Activated T-helper 2 cell treated with anti-CD3 and anti-CD28 coated beads, Interferon-gamma antibody, Interleukin-2, Interleukin-4, amounts not matched to agents 10 μg/mL and 5 μg/mL and 100 μg/mL, durations not matched to agents 14 hours and 24 hours and 36 hours (primary cell): ENCODE measurements at regions of chr14 and their contacts with region 1.

Region 1: DNA sequence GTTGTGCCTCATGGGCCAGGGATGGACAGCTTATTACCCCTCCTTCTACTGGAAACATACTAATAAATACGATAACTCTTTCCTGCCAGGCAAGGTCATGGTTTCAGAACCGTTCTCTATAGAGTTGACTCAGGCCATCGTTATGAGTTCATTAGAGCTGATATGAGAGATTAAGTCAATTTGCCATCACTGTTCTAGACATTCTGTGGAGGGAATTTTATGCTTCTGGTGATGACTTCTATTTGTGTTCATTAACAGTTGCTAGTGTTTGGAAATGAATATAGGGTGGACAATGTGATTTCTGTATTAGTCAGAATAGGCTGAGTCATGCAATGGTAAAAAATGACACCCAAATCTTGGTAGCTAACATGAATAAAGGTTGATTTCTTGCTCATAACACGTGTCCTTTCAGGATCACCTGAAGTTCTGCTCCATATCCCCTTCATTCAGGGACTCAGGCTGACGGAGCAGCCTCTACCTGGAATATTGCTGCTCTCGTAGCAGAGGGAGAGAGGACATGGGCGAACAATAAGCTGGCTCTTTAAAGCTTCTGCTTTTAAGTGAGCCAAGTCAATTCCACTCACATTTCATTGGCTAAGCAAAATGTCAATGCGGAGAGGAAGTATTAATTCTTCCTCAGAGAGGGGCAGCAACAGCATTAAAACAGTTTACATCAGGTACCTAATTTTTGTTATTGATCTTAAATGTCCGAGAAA is 18.5 kb upstream of the TBPL2 start:
- DNase-seq: no peak
- H3K4me3 Mint-ChIP-seq: no peak overlapping the region
- H3K27ac Mint-ChIP-seq: peak overlapping the region; percentile 31
- H3K4me1 Mint-ChIP-seq: peaks cover 22% of the 10 kb centered on the region
- H3K27me3 Mint-ChIP-seq: peaks cover 18% of the 10 kb centered on the region

Region 2: GRCh38 chr14:55180434-55180833 is 278.5 kb before region 1 on chr14:
- intact Hi-C with region 1: no loop called
- DNase-seq: no peak
- H3K4me3 Mint-ChIP-seq: no peak overlapping the region
- H3K27ac Mint-ChIP-seq: no peak overlapping the region
- H3K4me1 Mint-ChIP-seq: peaks cover 7% of the 10 kb centered on the region
- H3K27me3 Mint-ChIP-seq: no peaks in the 10 kb centered on the region

Region 3: DNA sequence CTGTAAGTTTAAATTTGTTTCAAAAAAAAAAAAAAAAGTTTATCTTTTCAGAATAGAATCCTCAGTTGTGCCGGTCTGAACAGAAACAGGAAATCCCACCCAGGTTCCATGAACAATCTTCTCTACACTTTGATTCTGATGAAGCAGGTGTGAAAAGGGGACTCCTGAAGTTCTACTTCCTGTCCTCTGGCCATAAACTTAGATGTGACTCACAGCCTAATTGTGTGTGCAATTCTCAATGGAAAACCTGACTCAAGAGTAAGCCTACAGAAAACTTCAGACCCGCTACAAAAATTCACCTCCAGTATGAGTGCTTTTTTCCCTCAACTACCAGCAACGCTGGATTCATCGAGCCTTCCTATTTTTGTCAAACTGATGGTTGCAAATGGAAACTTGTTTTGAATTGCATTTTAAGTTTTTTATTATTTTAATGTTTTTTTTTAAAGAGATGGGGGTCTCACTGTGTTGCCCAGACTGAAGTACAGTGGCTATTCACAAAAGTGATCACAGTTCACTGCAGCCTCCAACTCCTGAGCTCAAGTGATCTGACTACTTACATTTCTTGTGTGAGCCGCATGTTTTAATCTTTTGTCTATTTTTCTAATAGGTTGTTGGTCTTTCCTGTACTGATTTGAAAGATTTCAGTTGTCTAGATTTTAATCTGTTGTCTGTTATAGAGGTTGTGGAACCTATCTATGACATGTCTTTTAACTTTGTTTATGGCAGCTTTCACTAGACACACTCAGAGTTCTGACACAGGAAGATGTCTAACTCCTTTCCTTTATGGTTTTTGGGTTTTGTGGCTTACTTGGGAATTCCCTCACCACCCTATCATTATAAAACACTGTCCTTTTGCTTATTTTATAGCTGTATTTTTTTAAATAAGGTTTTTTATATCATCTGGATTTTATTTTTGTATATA is 84.9 kb before region 1 on chr14:
- intact Hi-C with region 1: loop called (anchors 1 kb)
- DNase-seq: peak; percentile 22
- H3K4me3 Mint-ChIP-seq: peak overlapping the region; percentile 44
- H3K27ac Mint-ChIP-seq: peak overlapping the region; percentile 95
- H3K4me1 Mint-ChIP-seq: peaks cover 25% of the 10 kb centered on the region
- H3K27me3 Mint-ChIP-seq: no peaks in the 10 kb centered on the region

Region 4: GRCh38 chr14:55579724-55580469 is 120.9 kb after region 1 on chr14 and contains the start of gene KTN1:
- intact Hi-C with region 1: loop called (anchors 1 kb)
- DNase-seq: peak; percentile 80
- H3K4me3 Mint-ChIP-seq: peak within 1 kb of the TSS; percentile 90
- H3K27ac Mint-ChIP-seq: peak within 1 kb of the TSS; percentile 86
- H3K4me1 Mint-ChIP-seq: peaks cover 33% of the 10 kb centered on the region
- H3K27me3 Mint-ChIP-seq: no peaks in the 10 kb centered on the region
- total RNA-seq, gene KTN1: 135 and 137 TPM in 2 replicates

Region 5: DNA sequence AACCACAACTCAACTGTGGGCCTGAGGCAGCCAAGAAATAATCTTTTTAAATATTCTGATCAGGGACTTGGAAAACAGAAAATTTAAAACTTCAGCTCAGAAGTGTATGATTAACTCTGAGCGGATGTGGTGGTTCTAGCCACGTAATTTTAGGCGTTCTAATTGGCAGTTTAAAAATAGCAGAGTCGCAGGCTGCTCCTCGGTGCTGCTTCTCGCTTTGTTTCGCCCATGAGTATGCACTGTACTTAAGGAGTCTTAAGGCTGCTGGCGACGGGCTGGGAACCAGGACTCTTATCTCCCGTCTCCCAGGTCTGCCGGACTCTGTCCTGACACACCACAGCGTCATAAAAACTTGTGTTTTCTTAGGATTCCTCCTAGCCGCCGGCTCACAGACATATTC is 545.8 kb after region 1 on chr14:
- intact Hi-C with region 1: loop called (anchors 5 kb)
- DNase-seq: peak; percentile 20
- H3K4me3 Mint-ChIP-seq: peak overlapping the region; percentile 28
- H3K27ac Mint-ChIP-seq: peak overlapping the region; percentile 52
- H3K4me1 Mint-ChIP-seq: peaks cover 27% of the 10 kb centered on the region
- H3K27me3 Mint-ChIP-seq: peaks cover 33% of the 10 kb centered on the region